ENCODE measurements at regions of chr1 and their contacts with region 1.

Region 1: DNA sequence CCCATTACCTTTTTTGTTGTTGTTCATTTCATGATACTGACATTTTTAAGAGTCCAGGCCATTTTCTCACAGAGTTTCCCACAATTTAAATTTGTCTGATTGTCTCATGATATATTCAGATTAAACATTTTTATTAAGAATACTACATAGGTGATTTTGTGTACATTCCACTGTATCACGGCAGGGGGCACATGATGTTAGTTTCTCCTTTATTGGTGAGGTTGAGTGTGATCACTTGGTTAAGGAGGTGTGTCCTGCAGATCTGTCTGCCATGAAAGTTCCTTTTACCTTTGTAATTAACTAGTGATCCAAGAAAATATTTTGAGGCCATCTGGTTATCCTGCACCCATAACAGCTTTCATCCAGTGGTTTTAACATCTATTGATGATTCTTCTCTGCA is 11.8 kb downstream of the RTCA start:
- DNase-seq: no peak
- ATAC-seq: no peak
- H3K4me3 ChIP-seq: no peak overlapping the region
- H3K27ac ChIP-seq: no peak overlapping the region
- H3K4me1 ChIP-seq: peaks cover 17% of the 10 kb centered on the region
- H3K27me3 ChIP-seq: no peaks in the 10 kb centered on the region
- CTCF ChIP-seq: no peak

Region 2: GRCh38 chr1:99906535-99906934 is 371.3 kb before region 1 on chr1:
- intact Hi-C with region 1: loop called in 1 of 2 experiments (anchors 10 kb)
- DNase-seq: no peak
- ATAC-seq: no peak
- H3K4me3 ChIP-seq: no peak overlapping the region
- H3K27ac ChIP-seq: no peak overlapping the region
- H3K4me1 ChIP-seq: no peaks in the 10 kb centered on the region
- H3K27me3 ChIP-seq: no peaks in the 10 kb centered on the region
- CTCF ChIP-seq: no peak

Region 3: DNA sequence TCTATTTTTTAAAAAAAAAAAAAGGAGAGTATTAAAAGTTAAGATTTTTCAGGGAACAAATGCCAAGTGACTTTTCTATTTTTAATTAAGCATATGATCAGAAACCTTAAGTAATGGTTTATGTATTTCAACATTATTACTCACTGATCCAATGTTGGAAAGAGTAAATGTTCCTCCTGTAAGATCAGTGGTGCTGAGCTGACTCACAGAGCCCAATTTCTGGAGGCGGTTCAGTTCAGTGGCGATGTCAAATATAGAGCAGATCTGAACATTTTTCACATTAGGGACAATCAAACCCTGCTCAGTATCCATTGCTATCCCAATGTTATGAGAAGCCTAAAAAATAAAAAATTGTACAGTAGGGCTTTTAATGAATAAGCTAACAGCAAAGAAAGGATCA is 71.6 kb before region 1 on chr1:
- intact Hi-C with region 1: no loop called
- DNase-seq: no peak
- ATAC-seq: no peak
- H3K4me3 ChIP-seq: no peak overlapping the region
- H3K27ac ChIP-seq: no peak overlapping the region
- H3K4me1 ChIP-seq: no peaks in the 10 kb centered on the region
- H3K27me3 ChIP-seq: no peaks in the 10 kb centered on the region
- CTCF ChIP-seq: no peak